Panc1 (cell line): ENCODE measurements at regions of chr11 and their contacts with region 1.

Region 1: DNA sequence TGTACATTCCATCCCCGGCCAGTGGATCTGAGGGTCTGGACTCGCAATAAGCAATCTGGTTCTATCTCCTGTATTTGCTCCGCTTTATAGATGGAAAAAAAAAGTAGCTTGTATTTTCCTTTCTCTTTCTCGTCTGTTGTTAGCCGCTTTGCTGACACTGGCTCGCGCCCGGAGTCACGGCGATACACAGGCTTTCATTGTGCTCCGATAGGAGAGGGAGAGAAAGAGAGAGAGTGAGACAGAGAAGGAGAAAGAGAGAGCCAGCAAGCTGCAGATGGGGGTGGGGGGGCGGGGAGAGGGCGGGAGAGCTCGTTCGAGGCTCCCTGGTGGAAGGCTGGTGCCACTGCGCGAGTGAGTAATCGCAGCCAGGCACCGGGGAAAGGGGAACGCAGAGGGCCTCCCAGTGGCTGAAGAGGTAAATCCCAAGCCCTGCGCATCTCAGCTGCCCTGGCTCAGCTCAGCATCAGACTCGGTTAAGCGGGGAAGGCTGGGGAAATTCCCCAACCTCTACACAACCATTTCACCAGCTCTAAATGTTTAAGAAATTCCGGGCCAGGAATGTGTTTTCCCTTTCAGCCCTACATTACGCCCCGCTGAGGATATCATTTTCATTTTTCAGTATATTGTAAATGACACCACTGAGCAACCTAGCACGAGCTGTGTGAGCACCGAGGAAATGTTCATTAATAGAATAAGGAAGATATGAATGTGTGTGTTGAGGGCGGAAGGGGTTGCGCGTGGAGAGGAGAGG is at the start of gene MAML2:
- DNase-seq: peak; percentile 89
- ATAC-seq: peak; percentile 96
- H3K4me3 ChIP-seq: peak within 1 kb of the TSS; percentile 49 to 77
- H3K27ac ChIP-seq: peak within 1 kb of the TSS; percentile 48
- H3K4me1 ChIP-seq: peaks cover 34% of the 10 kb centered on the region
- H3K27me3 ChIP-seq: no peaks in the 10 kb centered on the region
- CTCF ChIP-seq: peak; percentile 99
- total RNA-seq, gene MAML2: 2.9 TPM

Region 2: GRCh38 chr11:95923728-95924413 is 419.3 kb before region 1 on chr11 and contains the start of gene MTMR2:
- CTCF ChIA-PET with region 1: interaction called, 9 read pairs
- POLR2A ChIA-PET with region 1: interaction called, 5 read pairs
- in situ Hi-C with region 1: no loop called
- intact Hi-C with region 1: loop called (anchors 10 kb)
- DNase-seq: no peak
- ATAC-seq: peak; percentile 98
- H3K4me3 ChIP-seq: peak within 1 kb of the TSS; percentile 85 to 90
- H3K27ac ChIP-seq: peak within 1 kb of the TSS; percentile 99
- H3K4me1 ChIP-seq: peaks cover 29% of the 10 kb centered on the region
- H3K27me3 ChIP-seq: no peaks in the 10 kb centered on the region
- CTCF ChIP-seq: no peak
- total RNA-seq, gene MTMR2: 44.8 TPM

Region 3: GRCh38 chr11:95977534-95978174 is 365.5 kb before region 1 on chr11:
- CTCF ChIA-PET with region 1: no interaction called
- POLR2A ChIA-PET with region 1: no interaction called
- in situ Hi-C with region 1: no loop called
- intact Hi-C with region 1: no loop called
- DNase-seq: peak; percentile 76
- ATAC-seq: peak; percentile 98
- H3K4me3 ChIP-seq: no peak overlapping the region; a peak in 1 of 4 replicates
- H3K27ac ChIP-seq: peak overlapping the region; percentile 66
- H3K4me1 ChIP-seq: peaks cover 21% of the 10 kb centered on the region
- H3K27me3 ChIP-seq: no peaks in the 10 kb centered on the region
- CTCF ChIP-seq: no peak

Region 4: DNA sequence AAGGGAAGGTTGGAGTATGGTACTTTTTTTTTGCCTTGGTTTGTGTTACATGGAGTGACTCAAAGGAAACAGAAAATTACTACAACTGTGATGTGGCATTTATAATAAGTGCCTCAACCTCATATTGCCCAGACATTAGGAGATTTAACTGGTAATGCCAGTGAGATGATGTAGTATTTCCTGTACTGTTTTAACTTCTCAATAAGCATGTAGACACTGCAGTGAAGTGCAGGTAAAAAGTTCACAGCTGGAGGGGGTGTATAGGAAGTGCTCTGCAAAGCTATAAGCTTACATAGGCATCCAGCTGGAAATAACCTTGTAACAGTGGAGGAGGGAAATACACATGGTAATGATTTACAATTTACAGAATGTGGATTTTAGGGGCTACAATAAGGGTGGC is 281.0 kb before region 1 on chr11:
- CTCF ChIA-PET with region 1: no interaction called
- POLR2A ChIA-PET with region 1: no interaction called
- in situ Hi-C with region 1: loop called (anchors 10 kb)
- intact Hi-C with region 1: no loop called
- DNase-seq: no peak
- ATAC-seq: no peak
- H3K4me3 ChIP-seq: no peak overlapping the region
- H3K27ac ChIP-seq: no peak overlapping the region
- H3K4me1 ChIP-seq: no peaks in the 10 kb centered on the region
- H3K27me3 ChIP-seq: no peaks in the 10 kb centered on the region
- CTCF ChIP-seq: no peak

Region 5: GRCh38 chr11:96306933-96307775 is 36.0 kb before region 1 on chr11:
- CTCF ChIA-PET with region 1: interaction called, 8 read pairs
- POLR2A ChIA-PET with region 1: interaction called, 13 read pairs
- in situ Hi-C with region 1: no loop called
- intact Hi-C with region 1: no loop called
- DNase-seq: peak; percentile 95
- ATAC-seq: peak; percentile 86
- H3K4me3 ChIP-seq: peak overlapping the region; percentile 27 to 59
- H3K27ac ChIP-seq: peak overlapping the region; percentile 91
- H3K4me1 ChIP-seq: peaks cover 82% of the 10 kb centered on the region
- H3K27me3 ChIP-seq: no peaks in the 10 kb centered on the region
- CTCF ChIP-seq: no peak

Region 6: GRCh38 chr11:96875712-96876111 is 532.6 kb after region 1 on chr11:
- CTCF ChIA-PET with region 1: no interaction called
- POLR2A ChIA-PET with region 1: no interaction called
- in situ Hi-C with region 1: no loop called
- intact Hi-C with region 1: no loop called
- DNase-seq: no peak
- ATAC-seq: no peak
- H3K4me3 ChIP-seq: no peak overlapping the region
- H3K27ac ChIP-seq: no peak overlapping the region
- H3K4me1 ChIP-seq: no peaks in the 10 kb centered on the region
- H3K27me3 ChIP-seq: no peaks in the 10 kb centered on the region
- CTCF ChIP-seq: no peak